Dorsolateral prefrontal cortex (tissue), 120 donors: ENCODE measurements at regions of chr21 and their contacts with region 1.

Region 1: DNA sequence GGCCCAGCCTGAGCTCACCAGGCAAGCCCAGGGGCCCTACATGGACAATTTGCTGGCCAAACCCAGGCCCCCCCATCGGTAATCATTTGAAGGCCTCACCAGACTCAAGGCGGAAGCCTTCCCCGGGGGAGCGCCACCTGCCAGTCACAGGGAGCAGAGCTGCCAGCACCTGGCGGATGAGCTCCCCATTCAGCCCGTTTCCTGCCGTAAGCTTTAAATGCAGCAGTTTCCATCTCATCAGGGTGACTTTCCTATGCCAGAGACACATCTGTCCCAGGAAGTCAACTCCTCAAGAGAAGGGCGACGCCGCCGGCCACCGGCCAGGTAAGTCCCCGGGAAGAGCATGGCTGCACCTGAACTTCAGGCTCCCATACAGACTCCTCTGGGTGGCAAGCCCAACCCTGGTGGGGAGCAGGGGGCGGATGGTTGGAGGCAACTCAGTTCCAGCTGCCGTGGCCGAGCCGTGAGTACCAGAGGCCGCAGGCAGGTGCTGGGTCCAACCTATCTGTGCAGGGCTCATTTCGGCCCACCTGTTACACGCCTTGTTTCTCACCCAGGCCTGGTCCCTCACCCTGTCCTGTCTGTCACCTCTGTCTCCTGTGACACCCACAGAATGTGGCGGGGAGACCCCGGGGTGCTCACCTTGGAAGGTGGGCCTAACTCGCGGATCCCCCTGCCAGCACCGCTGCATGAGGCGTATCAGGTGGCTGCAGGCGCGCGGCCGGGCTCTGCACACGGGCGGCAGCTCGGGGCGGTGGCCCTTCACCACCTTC is 20.7 kb downstream of the RIPK4 start:
- DNase-seq: no peak
- H3K4me3 ChIP-seq: no peak overlapping the region
- H3K27ac ChIP-seq: no peak overlapping the region
- H3K27me3 ChIP-seq: peaks cover 0 to 23% (median 0%) of the 10 kb centered on the region in 45 donors
- CTCF ChIP-seq: no peak

Region 2: GRCh38 chr21:41823166-41823565 is 77.0 kb after region 1 on chr21:
- intact Hi-C with region 1: no loop called
- DNase-seq: peak in 1 of 10 donors; percentile 28
- H3K4me3 ChIP-seq: no peak overlapping the region
- H3K27ac ChIP-seq: no peak overlapping the region
- H3K27me3 ChIP-seq: no peaks in the 10 kb centered on the region
- CTCF ChIP-seq: no peak

Region 3: DNA sequence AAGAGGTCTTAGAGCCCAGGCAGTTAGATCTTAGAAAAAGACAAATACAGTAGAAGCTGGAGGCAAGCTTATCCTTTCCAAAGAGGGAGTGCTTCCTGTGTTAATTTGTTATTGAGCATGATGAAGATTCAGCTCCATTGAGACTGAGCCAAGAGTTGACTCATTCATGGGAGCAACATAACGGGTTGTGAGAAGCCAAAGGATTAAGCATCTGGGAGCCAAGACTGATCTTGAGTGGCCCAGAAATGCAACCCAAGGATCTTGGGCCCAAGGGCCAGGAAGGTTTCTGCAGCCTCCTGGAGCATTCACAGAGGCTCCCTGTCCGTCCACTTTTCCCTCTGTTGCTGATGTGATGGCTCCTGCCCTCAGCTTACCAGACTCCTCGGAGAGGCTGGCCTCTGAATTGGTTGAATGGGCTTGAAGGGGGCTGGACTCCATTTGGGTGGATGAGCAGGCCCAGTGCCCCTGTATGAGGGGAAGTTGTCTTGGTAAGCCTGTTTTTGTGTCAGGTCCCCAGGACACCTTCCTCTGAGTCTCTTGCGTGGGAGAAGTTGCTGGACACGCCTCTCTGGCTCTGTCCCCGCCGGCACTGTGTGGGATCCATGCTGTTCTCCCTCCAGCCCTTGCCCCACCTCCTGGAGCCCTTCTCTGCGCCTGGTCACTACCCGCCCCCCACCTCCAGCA is 949.7 kb after region 1 on chr21:
- intact Hi-C with region 1: loop called in 1 of 2 experiments (anchors 10 kb)
- DNase-seq: no peak
- H3K4me3 ChIP-seq: no peak overlapping the region
- H3K27ac ChIP-seq: peak overlapping the region in 2 of 59 donors; percentile 0 to 2
- H3K27me3 ChIP-seq: no peaks in the 10 kb centered on the region
- CTCF ChIP-seq: no peak